Transverse colon (tissue), 4 donors: ENCODE measurements at regions of chrX and their contacts with region 1.

Region 1: GRCh38 chrX:43958529-43958928 is 14.7 kb downstream of the NDP start:
- DNase-seq: peak; percentile 12
- H3K4me3 ChIP-seq: no peak overlapping the region
- H3K27ac ChIP-seq: no peak overlapping the region
- H3K4me1 ChIP-seq: no peaks in the 10 kb centered on the region
- H3K27me3 ChIP-seq: no peaks in the 10 kb centered on the region
- CTCF ChIP-seq: peak; percentile 57 to 87 (median 68)
- EP300 ChIP-seq: no peak
- POLR2A ChIP-seq: no peak

Region 2: DNA sequence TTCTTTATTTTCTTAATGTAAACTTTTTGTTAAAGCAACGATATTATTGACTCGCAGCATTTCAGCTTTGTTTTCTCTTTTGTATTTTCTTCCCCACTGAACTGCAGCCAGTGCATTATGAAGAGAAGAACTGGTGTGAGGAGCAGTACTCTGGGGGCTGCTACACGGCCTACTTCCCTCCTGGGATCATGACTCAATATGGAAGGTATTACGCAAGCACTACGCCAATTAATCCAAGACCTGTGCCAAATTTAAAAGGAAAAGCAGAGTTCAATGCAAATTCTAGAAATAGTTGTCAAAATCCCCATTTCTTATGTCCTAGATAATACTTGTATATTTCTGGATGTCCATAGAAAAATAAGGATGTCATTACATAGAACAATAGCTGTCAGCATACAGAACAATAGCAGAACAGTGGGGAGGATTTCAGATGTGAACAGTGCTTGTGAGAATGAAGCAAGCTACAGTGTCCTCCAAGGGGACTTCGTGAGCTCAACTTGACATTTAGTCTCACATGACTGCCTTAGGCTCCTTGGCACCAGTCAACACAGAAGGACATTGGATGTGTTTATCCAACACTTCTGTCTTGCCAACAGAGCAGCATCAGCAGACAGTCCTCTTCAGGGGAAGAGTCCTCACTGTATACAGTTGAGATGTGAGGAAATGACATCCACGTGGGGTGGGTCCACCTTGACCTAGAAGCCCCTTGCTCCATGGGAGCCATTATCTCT is 216.5 kb before region 1 on chrX:
- in situ Hi-C with region 1: no loop called
- intact Hi-C with region 1: no loop called
- DNase-seq: no peak
- H3K4me3 ChIP-seq: no peak overlapping the region
- H3K27ac ChIP-seq: peak overlapping the region in 2 of 4 donors; percentile 26 to 43
- H3K4me1 ChIP-seq: peaks cover 0 to 45% (median 15%) of the 10 kb centered on the region in 4 donors
- H3K27me3 ChIP-seq: no peaks in the 10 kb centered on the region
- CTCF ChIP-seq: no peak
- EP300 ChIP-seq: no peak
- POLR2A ChIP-seq: no peak

Region 3: DNA sequence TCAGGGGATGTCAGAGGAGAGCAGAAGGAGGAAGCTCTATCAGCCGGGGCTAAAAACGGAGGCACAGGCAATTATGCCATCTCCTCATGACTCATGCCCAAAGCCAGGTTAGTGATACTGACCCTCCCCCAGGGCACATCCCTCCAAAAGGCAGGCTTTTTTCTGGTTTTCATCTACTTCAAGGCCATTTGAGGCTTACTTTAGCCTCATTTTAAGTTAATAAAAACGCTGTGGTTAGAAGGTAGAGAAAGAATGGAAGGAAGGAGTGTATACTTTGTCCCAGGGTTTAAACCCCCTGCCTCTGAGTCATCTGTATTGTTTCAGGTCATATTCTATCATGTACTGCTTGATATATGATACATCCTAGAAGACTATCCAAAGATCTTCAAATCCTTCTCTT is 104.3 kb after region 1 on chrX:
- in situ Hi-C with region 1: no loop called
- intact Hi-C with region 1: no loop called
- DNase-seq: no peak
- H3K4me3 ChIP-seq: no peak overlapping the region
- H3K27ac ChIP-seq: no peak overlapping the region
- H3K4me1 ChIP-seq: no peaks in the 10 kb centered on the region
- H3K27me3 ChIP-seq: no peaks in the 10 kb centered on the region
- CTCF ChIP-seq: no peak
- EP300 ChIP-seq: no peak
- POLR2A ChIP-seq: no peak

Region 4: GRCh38 chrX:44244008-44244407 is 285.5 kb after region 1 on chrX:
- in situ Hi-C with region 1: no loop called
- intact Hi-C with region 1: loop called (anchors 5 kb)
- DNase-seq: no peak
- H3K4me3 ChIP-seq: no peak overlapping the region
- H3K27ac ChIP-seq: no peak overlapping the region
- H3K4me1 ChIP-seq: no peaks in the 10 kb centered on the region
- H3K27me3 ChIP-seq: no peaks in the 10 kb centered on the region
- CTCF ChIP-seq: peak; percentile 35 to 46 (median 38)
- EP300 ChIP-seq: no peak
- POLR2A ChIP-seq: no peak

Region 5: GRCh38 chrX:45070116-45071007 is 1111.8 kb after region 1 on chrX:
- in situ Hi-C with region 1: loop called in 1 of 4 experiments (anchors 25 kb)
- intact Hi-C with region 1: no loop called
- DNase-seq: no peak
- H3K4me3 ChIP-seq: no peak overlapping the region
- H3K27ac ChIP-seq: no peak overlapping the region
- H3K4me1 ChIP-seq: no peaks in the 10 kb centered on the region
- H3K27me3 ChIP-seq: no peaks in the 10 kb centered on the region
- CTCF ChIP-seq: peak; percentile 26 to 63 (median 48)
- EP300 ChIP-seq: no peak
- POLR2A ChIP-seq: no peak

Region 6: DNA sequence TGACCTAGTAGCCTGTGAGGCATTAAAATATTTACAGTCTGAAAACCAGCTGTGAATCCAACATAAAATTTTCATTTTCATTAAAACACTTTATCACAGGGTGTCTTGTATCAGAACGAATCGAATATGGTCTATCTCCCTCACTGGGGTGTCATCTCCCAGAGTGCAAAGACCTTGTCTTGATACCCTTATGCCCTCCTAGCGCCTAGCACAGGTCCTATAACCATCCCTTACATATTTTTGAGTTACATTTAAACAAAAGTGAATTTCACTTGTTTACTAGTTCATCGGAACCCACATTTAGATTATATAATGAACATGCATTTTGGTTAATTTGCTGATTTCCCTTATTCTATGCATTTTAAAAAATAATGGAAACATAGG is 1228.1 kb after region 1 on chrX:
- in situ Hi-C with region 1: loop called in 1 of 4 experiments (anchors 25 kb)
- intact Hi-C with region 1: no loop called
- DNase-seq: no peak
- H3K4me3 ChIP-seq: peak overlapping the region in 1 of 4 donors; percentile 28
- H3K27ac ChIP-seq: peak overlapping the region in 1 of 4 donors; percentile 65
- H3K4me1 ChIP-seq: no peaks in the 10 kb centered on the region
- H3K27me3 ChIP-seq: no peaks in the 10 kb centered on the region
- CTCF ChIP-seq: no peak
- EP300 ChIP-seq: no peak
- POLR2A ChIP-seq: no peak